Activated T-helper 2 cell treated with anti-CD3 and anti-CD28 coated beads, Interferon-gamma antibody, Interleukin-2, Interleukin-4, amounts not matched to agents 10 μg/mL and 5 μg/mL and 100 μg/mL, durations not matched to agents 14 hours and 24 hours and 36 hours (primary cell): ENCODE measurements at regions of chr21 and their contacts with region 1.

Region 1: DNA sequence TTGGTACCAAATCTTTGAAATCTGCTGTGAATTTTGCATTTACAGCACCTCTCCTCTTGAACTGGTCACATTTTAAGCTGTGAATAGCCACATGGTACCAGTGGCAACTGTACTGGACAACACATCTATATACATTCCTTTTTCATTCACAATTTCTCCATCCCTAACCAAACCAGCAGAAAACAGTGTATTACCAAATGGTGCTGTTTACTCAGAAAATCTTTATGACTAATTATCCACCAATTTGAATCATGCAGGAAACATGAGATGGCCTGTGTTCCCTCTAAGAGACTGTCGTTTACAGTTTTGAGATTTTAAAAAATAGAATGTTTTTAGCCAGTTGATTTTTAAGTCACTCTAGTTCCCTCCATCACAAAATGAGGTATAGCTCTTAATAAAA is 17.6 kb upstream of the CCT8 start:
- DNase-seq: no peak
- H3K4me3 Mint-ChIP-seq: no peak overlapping the region
- H3K27ac Mint-ChIP-seq: no peak overlapping the region
- H3K4me1 Mint-ChIP-seq: peaks cover 30% of the 10 kb centered on the region
- H3K27me3 Mint-ChIP-seq: peaks cover 5% of the 10 kb centered on the region

Region 2: DNA sequence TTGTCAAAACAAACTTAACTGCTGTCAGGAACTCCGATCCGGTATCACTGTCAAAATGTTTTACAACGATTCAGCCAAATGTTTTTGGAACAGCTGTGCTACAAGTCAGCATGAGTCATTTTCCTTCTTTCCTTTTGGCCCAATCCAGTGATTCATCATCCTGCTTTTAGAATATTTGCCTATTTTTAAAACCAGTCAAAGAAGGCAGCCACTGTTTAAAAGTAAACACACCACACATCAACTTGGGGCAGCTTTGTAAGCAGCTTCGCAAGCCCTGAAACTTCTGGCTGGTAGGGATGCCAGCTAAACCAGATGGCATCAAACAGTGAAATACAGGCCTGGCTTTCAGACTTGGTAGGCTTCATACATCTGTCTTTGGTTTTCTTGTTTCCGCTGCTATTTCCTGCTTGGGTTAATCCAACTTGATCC is 54.3 kb after region 1 on chr21:
- intact Hi-C with region 1: loop called (anchors 1 kb)
- DNase-seq: no peak
- H3K4me3 Mint-ChIP-seq: no peak overlapping the region
- H3K27ac Mint-ChIP-seq: no peak overlapping the region
- H3K4me1 Mint-ChIP-seq: peaks cover 16% of the 10 kb centered on the region
- H3K27me3 Mint-ChIP-seq: no peaks in the 10 kb centered on the region

Region 3: DNA sequence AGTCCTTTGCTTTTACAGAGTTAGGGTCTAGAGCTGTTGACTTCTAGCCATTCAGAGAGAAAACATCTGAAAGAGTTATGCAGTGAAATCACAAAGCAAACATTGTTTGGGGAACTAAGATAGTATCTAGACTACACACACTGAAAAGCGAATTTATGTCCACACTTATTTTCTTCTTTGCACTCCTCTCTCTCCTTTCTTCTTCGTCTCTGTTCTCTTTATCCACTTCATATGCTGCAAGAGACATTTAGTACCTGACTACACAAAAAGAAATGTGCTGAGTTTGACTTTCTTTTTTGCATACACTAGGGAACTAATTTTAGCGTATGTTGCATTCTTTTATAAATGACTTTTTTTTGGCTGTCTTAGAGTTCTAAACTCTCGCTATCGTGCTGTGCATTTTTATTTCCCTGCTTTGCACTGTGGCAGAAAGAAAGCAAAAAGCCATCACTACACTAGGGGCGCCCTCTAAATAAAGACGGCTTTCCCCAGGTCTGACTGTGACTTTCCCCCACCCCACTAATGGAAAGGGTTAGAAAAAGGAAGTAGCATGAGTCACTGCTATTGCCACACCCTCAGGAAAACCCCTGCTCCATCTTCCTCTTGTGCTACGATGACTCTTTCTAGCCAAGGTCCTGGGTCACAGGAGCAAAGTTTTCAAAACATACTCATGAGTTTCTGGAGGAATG is 105.1 kb after region 1 on chr21:
- intact Hi-C with region 1: loop called (anchors 1 kb)
- DNase-seq: peak; percentile 64
- H3K4me3 Mint-ChIP-seq: peak overlapping the region; percentile 80
- H3K27ac Mint-ChIP-seq: peak overlapping the region; percentile 80
- H3K4me1 Mint-ChIP-seq: peaks cover 32% of the 10 kb centered on the region
- H3K27me3 Mint-ChIP-seq: no peaks in the 10 kb centered on the region

Region 4: GRCh38 chr21:29245104-29245643 is 154.1 kb after region 1 on chr21:
- intact Hi-C with region 1: loop called (anchors 1 kb)
- DNase-seq: no peak
- H3K4me3 Mint-ChIP-seq: no peak overlapping the region
- H3K27ac Mint-ChIP-seq: peak overlapping the region; percentile 17
- H3K4me1 Mint-ChIP-seq: peaks cover 9% of the 10 kb centered on the region
- H3K27me3 Mint-ChIP-seq: peaks cover 29% of the 10 kb centered on the region

Region 5: DNA sequence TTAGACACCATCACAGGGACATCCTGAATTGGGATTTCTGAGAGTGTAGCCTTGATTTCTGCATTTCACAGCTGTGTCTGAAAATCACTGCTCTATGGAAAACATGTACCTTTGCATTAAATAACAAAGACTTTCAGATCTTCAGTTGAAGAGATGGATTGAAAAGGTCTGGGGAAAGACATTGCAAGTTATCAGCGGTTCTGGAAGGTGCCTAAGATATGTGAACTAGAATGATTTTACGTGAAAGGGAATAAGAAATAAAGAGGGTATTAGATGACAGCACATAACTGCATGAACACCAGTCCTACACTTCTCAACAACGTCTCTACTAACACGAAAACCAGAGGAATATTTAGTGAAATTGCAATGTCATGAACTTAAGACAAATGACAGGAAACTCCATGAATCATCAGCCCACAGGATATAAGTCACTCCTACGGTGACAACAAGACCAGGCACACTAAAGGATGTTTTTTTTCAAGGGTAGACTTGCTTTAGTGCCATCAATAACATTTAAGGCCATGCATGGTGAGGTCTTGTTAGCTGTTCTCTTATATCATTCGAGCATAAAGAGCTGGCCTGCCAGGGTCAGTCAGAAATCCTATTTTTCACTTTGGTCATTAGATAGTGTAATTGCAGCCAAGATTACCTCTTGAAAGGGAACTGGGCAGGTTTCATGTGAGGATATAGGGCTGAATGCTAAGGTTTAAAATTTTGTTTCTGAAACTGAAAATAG is 565.6 kb after region 1 on chr21:
- intact Hi-C with region 1: loop called (anchors 10 kb)
- DNase-seq: peak; percentile 9
- H3K4me3 Mint-ChIP-seq: peak overlapping the region; percentile 27
- H3K27ac Mint-ChIP-seq: peak overlapping the region; percentile 66
- H3K4me1 Mint-ChIP-seq: peaks cover 17% of the 10 kb centered on the region
- H3K27me3 Mint-ChIP-seq: no peaks in the 10 kb centered on the region